ENCODE measurements at regions of chr3 and their contacts with region 1.

Region 1: DNA sequence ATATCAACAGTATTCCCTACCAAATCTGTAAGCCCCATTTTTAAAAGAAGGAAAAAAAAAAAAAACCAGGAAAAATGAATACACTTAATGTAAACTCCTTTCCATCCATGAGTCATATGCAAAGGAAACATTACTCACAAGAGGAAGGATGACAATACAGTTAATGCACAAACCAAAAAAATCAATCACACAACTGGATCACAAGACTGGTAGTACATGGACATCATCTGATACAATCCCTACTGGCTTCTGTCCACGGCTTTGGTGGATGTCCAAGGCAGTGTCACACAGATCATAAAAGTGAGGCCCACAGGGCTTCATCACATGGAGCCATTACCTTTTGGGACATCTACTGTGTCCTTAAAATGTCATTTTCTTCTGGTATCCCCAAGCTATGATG is 44.0 kb downstream of the SUCLG2 start:
- DNase-seq: peak; percentile 74
- ATAC-seq: peak; percentile 84
- H3K4me3 ChIP-seq: no peak overlapping the region
- H3K27ac ChIP-seq: peak overlapping the region; percentile 92
- H3K4me1 ChIP-seq: peaks cover 22% of the 10 kb centered on the region
- H3K27me3 ChIP-seq: no peaks in the 10 kb centered on the region
- CTCF ChIP-seq: no peak

Region 2: GRCh38 chr3:67515778-67516177 is 94.7 kb before region 1 on chr3:
- CTCF ChIA-PET with region 1: no interaction called
- POLR2A ChIA-PET with region 1: no interaction called
- intact Hi-C with region 1: loop called (anchors 1 kb)
- DNase-seq: no peak
- ATAC-seq: no peak
- H3K4me3 ChIP-seq: no peak overlapping the region
- H3K27ac ChIP-seq: no peak overlapping the region
- H3K4me1 ChIP-seq: no peaks in the 10 kb centered on the region
- H3K27me3 ChIP-seq: no peaks in the 10 kb centered on the region
- CTCF ChIP-seq: no peak

Region 3: DNA sequence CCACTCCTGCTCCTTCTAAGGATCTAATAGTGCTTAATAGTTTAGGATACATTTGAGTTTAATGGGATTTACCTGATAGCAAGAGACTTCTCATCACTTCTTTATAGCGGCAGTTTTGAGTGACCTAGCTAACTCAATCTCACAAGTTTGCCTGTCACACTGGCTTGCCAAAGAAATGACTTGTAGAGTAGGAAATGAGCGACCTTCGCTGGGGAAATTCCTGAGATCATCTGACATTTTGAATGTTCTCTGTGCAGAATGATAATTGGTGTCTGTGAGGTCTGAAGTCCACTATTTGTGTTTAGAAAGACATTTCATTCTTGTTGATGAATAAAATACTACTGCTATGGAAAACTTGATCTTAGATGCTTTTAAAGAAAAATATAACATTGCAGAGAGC is 13.6 kb after region 1 on chr3:
- CTCF ChIA-PET with region 1: no interaction called
- POLR2A ChIA-PET with region 1: no interaction called
- intact Hi-C with region 1: no loop called
- DNase-seq: no peak
- ATAC-seq: no peak
- H3K4me3 ChIP-seq: no peak overlapping the region
- H3K27ac ChIP-seq: no peak overlapping the region
- H3K4me1 ChIP-seq: no peaks in the 10 kb centered on the region
- H3K27me3 ChIP-seq: no peaks in the 10 kb centered on the region
- CTCF ChIP-seq: no peak

Region 4: DNA sequence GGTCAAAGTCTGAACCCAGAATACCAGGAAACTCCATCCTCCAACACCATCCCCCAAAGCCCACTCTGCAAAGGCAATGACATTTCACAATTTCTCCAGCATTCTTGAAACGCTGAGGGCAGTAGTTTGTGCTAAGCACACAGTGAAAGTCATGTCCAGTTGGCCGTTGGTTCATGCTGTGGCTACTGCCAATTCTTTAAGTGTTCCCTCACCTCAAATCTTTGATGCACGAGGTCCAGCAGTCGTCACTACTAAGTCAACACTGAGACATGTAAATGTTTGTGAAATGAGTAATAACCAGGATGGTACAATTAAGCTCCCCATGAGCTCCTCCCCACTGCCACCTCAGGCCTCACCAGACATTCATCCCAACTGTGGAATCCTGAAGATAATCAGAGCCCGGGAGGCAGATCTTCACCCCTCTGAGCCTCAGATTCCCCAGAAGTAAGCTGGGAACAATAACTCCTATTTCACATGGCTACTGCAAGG is 37.0 kb after region 1 on chr3:
- CTCF ChIA-PET with region 1: interaction called, 4 read pairs
- POLR2A ChIA-PET with region 1: no interaction called
- intact Hi-C with region 1: loop called (anchors 1 kb)
- DNase-seq: peak; percentile 88
- ATAC-seq: peak; percentile 92
- H3K4me3 ChIP-seq: no peak overlapping the region
- H3K27ac ChIP-seq: peak overlapping the region; percentile 99
- H3K4me1 ChIP-seq: peaks cover 37% of the 10 kb centered on the region
- H3K27me3 ChIP-seq: no peaks in the 10 kb centered on the region
- CTCF ChIP-seq: no peak